ENCODE measurements at regions of chr3 and their contacts with region 1.

Region 1: GRCh38 chr3:66756468-66757036 is 241.6 kb upstream of the KBTBD8 start:
- DNase-seq: no peak
- ATAC-seq: no peak
- H3K4me3 ChIP-seq: no peak overlapping the region
- H3K27ac ChIP-seq: no peak overlapping the region
- H3K4me1 ChIP-seq: no peaks in the 10 kb centered on the region
- H3K27me3 ChIP-seq: no peaks in the 10 kb centered on the region

Region 2: DNA sequence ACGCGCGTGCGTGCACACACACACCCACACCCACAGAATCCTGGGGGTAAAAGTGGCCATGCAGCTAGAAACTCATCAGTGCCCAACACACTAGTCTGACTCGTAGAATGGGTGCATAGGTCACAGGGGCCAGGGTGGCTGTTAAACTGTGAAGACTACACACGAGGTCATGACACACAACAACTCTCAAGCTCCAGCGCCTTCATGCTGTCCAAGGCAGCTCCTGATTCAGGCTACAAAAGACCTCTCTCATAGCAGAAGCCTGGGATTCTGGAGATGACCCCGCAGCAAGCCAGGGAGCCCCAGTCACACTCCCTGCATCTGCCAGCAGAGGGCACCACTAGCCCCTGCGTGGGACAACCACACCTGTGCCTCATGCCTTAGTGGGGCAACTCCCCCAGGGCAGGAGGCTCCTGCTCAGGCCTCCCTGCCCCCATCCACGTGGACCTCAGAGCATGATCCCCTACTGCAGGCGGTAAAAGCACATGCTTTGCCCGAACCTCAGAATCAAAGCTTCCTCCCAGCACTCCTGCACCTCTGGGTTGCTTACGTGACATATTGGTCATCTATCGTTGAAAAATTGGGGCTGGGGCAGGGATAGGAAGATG is 348.8 kb before region 1 on chr3:
- intact Hi-C with region 1: loop called in 1 of 4 experiments (anchors 10 kb)
- DNase-seq: peak; percentile 67 to 91 (median 89)
- ATAC-seq: peak; percentile 64 to 65
- H3K4me3 ChIP-seq: no peak overlapping the region
- H3K27ac ChIP-seq: no peak overlapping the region
- H3K4me1 ChIP-seq: peaks cover 2% of the 10 kb centered on the region
- H3K27me3 ChIP-seq: no peaks in the 10 kb centered on the region

Measured in right cardiac atrium (tissue), 5 donors.